Panc1 (cell line): ENCODE measurements at regions of chr12 and their contacts with region 1.

Region 1: DNA sequence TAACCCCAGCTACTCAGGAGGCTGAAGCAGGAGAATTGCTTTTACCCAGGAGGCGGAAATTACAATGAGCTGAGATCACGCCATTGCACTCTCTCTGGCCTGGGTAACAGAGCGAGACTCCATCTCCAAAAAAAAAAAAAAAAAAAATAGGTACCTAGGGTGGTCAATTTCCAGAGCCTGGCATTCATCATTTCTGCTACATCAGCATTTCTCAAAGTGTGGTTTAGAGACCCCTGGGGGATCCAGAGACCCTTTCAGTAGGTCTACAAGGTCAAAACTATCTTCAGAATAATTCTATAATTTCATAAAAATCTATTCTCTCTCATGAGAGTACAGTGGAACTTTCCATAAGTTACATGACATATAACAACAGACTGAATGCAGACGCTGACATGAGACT is 19.9 kb downstream of the CERS5 start:
- DNase-seq: no peak
- ATAC-seq: no peak
- H3K4me3 ChIP-seq: no peak overlapping the region
- H3K27ac ChIP-seq: no peak overlapping the region
- H3K4me1 ChIP-seq: peaks cover 9% of the 10 kb centered on the region; the same call in 1 of the 2 replicates
- H3K27me3 ChIP-seq: no peaks in the 10 kb centered on the region
- CTCF ChIP-seq: no peak

Region 2: DNA sequence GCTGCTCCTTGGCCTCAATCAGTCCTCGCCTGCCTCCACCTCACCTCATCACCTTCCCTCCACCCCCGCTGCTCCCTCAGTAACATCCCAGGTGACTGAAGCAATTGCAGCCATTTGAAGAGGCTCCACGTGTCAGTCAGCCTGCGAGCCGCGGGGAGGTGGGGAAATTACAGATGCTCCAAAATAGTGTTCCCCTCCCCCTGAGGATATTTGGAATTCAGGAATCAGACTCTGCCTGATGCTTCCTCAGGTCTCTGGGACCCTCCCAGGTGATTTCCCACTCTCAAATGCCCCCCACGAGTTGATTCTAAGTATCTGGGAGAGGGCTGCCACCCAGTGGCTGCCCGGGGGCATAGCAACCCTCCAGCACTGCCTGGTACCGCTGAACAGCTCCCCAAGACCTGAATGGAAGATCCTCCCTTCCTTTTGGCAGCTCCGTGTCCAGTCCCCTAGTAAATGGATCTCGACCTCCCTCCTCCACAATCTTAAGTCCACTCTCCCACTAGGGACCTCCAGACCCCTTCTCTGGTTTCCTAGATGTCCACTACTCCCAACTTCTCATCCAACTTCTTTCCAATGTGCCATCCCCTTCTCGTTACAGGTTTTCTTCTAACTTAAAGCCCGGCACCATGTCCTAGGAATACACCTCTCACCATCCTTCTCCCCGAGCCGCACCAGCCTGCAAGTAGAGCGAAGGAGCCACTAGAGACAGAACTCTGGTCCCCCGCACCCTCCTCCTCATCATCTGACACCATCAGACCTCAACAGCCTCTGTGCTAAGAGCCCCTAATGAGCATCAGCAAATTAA is 91.2 kb before region 1 on chr12:
- CTCF ChIA-PET with region 1: no interaction called
- POLR2A ChIA-PET with region 1: no interaction called
- in situ Hi-C with region 1: no loop called
- intact Hi-C with region 1: no loop called
- DNase-seq: no peak
- ATAC-seq: peak; percentile 69
- H3K4me3 ChIP-seq: peak overlapping the region in 1 of 2 experiments; percentile 25; a peak in 1 of 4 replicates
- H3K27ac ChIP-seq: no peak overlapping the region
- H3K4me1 ChIP-seq: peaks cover 13% of the 10 kb centered on the region
- H3K27me3 ChIP-seq: 0 out of 2 replicates have a peak, but pooled peaks cover 4% of the 10 kb centered on the region
- CTCF ChIP-seq: peak; percentile 97

Region 3: DNA sequence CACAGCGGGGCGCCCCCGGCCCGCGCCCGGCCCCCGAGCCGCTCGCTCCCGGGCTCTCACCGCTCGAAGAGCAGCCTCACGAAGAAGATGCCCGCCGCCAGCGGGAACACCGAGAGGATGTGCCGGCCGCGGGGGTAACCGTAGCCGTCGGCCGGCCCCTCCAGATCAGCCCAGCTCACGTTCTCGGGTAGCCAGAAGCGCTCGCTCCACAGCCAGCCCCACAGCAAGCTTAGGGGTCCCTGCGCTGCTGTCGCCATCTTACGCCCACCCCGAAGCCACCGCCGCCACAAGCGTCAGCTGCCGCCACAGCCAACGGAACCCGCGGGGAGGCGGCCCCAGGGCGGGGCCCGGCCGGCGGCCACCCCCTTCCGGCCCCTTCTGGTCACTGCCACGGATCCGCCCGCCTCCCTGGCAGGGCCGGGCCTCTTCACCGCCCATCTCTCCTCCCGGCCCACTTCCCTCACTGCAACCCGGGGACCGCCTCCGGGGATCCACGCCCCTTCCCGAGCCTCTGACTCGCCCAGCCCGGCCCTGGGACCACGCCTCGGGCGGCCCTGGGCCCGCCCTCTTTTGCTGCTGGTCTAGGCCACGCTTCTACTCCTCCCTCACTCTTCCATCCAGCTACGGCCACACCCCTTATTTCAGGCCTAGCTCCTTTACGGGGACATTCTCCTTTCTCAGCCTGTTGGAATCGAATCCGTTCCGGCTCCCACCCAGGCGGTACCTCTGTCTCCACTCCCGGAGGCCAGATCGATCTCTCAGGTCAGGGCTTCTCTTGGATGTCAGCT is 20.0 kb after region 1 on chr12 and contains the start of gene CERS5:
- CTCF ChIA-PET with region 1: interaction called, 6 read pairs
- POLR2A ChIA-PET with region 1: interaction called, 16 read pairs
- in situ Hi-C with region 1: no loop called
- intact Hi-C with region 1: no loop called
- DNase-seq: peak; percentile 92
- ATAC-seq: peak; percentile 99
- H3K4me3 ChIP-seq: peak within 1 kb of the TSS; percentile 60 to 81
- H3K27ac ChIP-seq: peak within 1 kb of the TSS; percentile 86
- H3K4me1 ChIP-seq: peaks cover 8% of the 10 kb centered on the region
- H3K27me3 ChIP-seq: no peaks in the 10 kb centered on the region
- CTCF ChIP-seq: no peak
- total RNA-seq, gene CERS5: 50.5 TPM